ENCODE measurements at regions of chr1 and their contacts with region 1.

Region 1: DNA sequence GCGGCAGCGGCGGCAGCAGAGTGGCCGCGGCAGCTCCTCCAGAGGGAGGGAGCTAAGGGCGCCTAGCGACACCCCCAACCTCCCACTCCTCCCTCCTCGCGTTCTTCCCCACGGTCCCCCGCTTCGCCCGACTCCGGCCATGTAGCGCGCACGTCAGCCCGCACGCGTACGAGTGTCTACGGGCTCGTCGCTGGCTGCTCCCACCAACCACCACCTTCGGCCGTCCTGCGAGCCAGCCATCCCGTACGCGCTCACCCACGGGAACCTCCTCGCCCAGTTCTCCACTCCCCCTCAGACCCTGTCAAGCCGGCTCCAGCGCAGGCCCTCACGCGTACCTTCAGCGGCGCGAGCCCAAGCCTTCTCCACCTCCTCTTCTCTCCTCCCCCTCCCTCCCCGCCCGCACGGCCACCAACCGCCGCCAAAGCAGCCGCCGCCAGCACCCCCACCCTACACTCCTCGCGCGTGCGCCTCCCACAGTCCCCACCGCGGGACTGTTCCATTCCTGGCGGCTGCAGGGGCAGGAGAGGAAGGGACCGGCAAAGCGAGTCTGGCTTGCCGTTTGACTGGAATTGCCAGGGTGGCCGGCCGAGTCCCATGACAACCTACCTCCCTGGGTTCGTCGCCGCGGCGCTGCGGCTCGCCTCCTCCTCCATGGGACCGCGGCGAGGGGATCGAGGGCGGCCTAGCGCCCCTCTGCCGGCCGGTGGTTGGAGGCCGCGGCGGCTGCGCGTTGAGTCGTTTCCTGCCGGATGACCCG is at the start of gene YY1AP1:
- DNase-seq: peak; percentile 97
- H3K4me3 Mint-ChIP-seq: peak within 1 kb of the TSS; percentile 97
- H3K27ac Mint-ChIP-seq: peak within 1 kb of the TSS; percentile 98
- H3K4me1 Mint-ChIP-seq: peaks cover 54% of the 10 kb centered on the region
- H3K27me3 Mint-ChIP-seq: no peaks in the 10 kb centered on the region
- total RNA-seq, gene YY1AP1: 64.3 and 65.1 TPM in 2 replicates

Region 2: GRCh38 chr1:155744711-155745283 is 56.3 kb after region 1 on chr1:
- intact Hi-C with region 1: loop called (anchors 1 kb)
- DNase-seq: no peak
- H3K4me3 Mint-ChIP-seq: peak overlapping the region; percentile 93
- H3K27ac Mint-ChIP-seq: peak overlapping the region; percentile 92
- H3K4me1 Mint-ChIP-seq: peaks cover 9% of the 10 kb centered on the region
- H3K27me3 Mint-ChIP-seq: no peaks in the 10 kb centered on the region

Measured in activated CD4-positive, alpha-beta T cell treated with anti-CD3 and anti-CD28 coated beads, Interleukin-2, amount 10 ng/mL, durations not matched to agents 24 days and 14 days (primary cell).